Posterior vena cava (tissue), 2 donors: ENCODE measurements at regions of chr17 and their contacts with region 1.

Region 1: DNA sequence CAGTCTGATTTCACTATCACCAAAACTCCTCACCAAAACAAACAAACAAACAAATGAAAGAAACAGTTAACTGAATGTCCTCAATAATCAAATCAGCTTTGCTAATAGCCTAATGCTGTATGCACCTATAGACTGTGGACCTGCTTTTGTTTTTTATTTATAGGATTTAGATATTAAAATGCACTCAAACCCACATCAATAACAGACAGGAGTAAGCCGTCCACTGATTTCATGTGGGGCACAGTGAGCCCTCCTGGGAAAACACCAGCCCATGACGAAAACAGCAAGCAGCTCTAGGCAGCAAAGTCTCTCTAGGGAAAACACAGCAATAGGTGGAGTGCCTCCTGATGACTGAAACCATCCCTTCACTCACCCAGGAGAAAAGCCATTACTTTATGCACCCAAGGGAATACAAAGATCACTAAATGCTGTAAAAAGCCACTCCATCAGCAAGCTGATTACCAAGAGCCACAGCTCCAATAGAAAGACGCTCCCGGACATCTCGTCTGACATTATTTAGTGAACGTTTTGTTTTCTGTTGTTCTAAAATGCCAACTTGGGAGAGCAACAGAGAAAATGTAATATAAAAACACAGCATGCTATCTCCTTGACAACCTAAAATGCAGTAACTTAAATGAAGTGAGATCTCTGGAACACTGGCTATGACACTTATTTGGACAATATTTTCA is 47.8 kb downstream of the ANKFY1 start:
- DNase-seq: no peak

Region 2: DNA sequence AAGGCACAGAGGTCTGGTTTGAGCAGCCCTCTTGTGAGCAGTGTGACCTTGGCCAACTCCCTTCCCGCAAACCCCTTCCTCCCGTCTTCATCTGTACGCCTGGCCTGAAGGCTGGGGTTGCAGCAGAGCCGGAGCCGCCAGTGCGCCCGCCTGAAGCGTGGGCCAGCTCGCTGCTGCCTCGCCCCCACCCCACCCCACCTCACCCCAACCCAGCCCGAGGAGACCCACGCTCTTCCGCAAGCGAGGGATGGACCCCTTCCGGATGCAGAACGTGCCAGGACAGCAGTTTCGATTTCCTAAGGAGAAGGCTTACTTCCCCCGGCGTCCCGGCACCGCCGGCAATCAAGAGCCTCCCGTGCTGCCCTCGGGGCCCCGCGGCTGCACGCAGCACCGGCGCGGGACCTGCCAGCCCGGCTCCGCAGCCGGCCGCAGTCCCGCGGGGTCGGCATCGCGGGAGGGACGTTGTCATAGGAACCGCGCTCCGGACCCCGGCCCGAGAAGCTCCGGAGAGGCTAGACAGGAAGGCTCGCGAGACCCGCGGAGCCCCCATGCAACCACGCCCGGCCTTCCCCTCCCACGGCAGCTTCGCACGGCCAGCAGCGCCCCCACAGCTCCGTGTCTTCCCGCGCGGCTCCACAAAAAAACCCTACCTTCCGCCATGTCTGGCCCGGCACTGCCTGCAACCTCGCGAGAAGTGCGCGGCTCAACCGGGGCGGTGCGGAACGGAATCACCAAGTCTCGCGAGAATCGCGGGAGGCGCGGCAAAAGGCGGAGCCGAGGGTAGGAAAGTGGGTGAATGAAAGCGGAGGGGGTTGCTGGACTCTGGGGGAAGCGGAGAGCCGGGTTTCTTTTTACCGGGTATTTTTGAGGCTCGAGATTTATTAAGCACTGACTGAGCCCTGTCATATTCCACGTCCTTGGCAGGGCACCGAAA is 47.5 kb after region 1 on chr17 and contains the start of gene ANKFY1:
- intact Hi-C with region 1: loop called in 1 of 2 experiments (anchors 5 kb)
- DNase-seq: peak; percentile 99
- total RNA-seq, gene ANKFY1: 34.9 to 49.2 TPM

Region 3: DNA sequence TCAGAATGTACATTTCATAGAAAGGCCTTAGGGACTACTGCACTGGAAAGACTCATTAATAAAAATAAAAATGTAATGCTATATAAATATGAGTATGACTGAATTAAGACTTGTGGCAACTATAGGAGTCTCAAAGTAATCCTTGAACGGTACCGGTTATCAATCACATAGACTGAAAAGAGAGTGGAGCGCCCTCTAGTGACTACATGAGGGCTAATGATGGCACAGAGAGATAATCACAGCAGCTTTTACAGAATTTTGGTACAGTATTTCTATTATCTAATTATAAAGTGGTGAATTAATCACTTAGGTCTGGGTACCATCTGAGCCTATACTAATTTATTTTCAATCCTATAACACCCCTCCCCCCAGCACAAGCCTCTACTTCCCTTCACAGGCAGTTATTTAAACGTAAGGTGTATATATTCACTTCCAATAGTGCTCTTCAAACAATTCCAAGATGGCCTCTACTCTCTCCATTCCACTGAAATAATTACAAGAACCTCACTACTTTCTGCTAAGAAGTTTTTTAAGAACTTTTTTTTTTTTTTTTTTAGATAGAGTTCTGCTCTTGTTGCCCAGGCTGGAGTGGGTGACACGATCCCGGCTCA is 88.5 kb after region 1 on chr17:
- intact Hi-C with region 1: loop called in 1 of 2 experiments (anchors 5 kb)
- DNase-seq: no peak

Region 4: GRCh38 chr17:4412933-4413831 is 197.2 kb after region 1 on chr17:
- intact Hi-C with region 1: loop called (anchors 5 to 10 kb)
- DNase-seq: peak; percentile 98